Right cardiac atrium (tissue), 5 donors: ENCODE measurements at regions of chr11 and their contacts with region 1.

Region 1: GRCh38 chr11:130427581-130428315 is 661 bp downstream of the ADAMTS8 start:
- DNase-seq: peak in 1 of 3 donors; percentile 73
- ATAC-seq: peak; percentile 5 to 19
- H3K4me3 ChIP-seq: peak overlapping the region; percentile 64
- H3K27ac ChIP-seq: no peak overlapping the region
- H3K4me1 ChIP-seq: no peaks in the 10 kb centered on the region
- H3K27me3 ChIP-seq: no peaks in the 10 kb centered on the region

Region 2: GRCh38 chr11:130213143-130213978 is 214.4 kb before region 1 on chr11:
- intact Hi-C with region 1: loop called (anchors 2 to 10 kb)
- DNase-seq: peak; percentile 52 to 85 (median 83)
- ATAC-seq: peak; percentile 54 to 71
- H3K4me3 ChIP-seq: no peak overlapping the region
- H3K27ac ChIP-seq: no peak overlapping the region
- H3K4me1 ChIP-seq: no peaks in the 10 kb centered on the region
- H3K27me3 ChIP-seq: no peaks in the 10 kb centered on the region